ENCODE measurements at regions of chr2 and their contacts with region 1.

Region 1: GRCh38 chr2:219294356-219295351 is 14.5 kb downstream of the PTPRN start:
- DNase-seq: peak; percentile 89 to 96
- H3K4me3 ChIP-seq: peak overlapping the region; percentile 60 to 79 (median 74)
- H3K27ac ChIP-seq: peak overlapping the region; percentile 41; the same call in 1 of the 2 replicates
- H3K4me1 ChIP-seq: peaks cover 0 to 8% (median 3%) of the 10 kb centered on the region in 4 experiments; a peak in 4 of 7 replicates
- H3K27me3 ChIP-seq: peaks cover 0 to 32% (median 19%) of the 10 kb centered on the region in 4 experiments; a peak in 6 of 7 replicates
- CTCF ChIP-seq: peak in 2 of 3 experiments; percentile 98 to 99; a peak in 3 of 4 replicates
- EP300 ChIP-seq: no peak
- POLR2A ChIP-seq: peak in 1 of 2 experiments; percentile 62; a peak in 2 of 3 replicates
- RAD21 ChIP-seq: peak; percentile 64 to 78

Region 2: DNA sequence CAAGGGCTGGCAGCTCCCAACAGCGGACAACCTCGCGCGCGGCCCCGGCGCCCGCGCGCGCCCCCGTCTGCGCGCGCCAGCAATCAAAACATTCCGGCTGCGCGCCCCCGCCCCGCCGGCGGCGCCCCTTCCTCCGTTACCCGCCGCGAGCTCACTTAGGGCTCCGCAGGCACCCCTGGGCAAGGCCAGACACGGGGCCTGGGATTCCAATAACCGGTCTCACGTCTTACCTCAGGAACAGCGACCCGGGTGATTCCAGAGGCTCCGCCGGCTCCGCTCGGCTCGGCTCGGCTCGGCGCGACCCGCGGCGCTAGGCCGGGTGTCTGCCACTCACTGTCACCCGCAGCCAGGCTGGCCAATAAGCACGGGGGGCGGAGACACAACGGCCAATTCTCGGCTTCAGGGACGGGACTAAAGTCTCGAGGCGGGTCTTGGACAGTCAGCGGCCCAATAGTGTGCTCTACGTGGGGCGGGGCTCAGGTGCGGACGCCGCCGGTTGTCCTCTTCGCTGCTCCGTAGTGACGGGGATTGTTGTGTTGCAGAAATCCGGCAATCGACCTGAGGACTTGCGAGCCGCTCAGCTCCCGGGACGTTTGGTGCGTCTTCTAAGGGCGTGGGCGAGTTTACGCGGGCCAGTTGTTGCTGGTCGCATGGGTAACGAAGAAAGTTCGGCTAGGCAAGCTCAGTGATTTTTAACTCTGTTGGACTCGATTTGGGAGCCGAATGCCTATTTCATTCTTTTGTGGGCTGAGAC is 65.2 kb before region 1 on chr2 and contains the starts of genes ANKZF1 and ATG9A:
- CTCF ChIA-PET with region 1: interaction called, 23 read pairs
- POLR2A ChIA-PET with region 1: no interaction called
- DNase-seq: peak; percentile 93 to 95
- H3K4me3 ChIP-seq: peak within 1 kb of the TSS; percentile 82 to 97 (median 92)
- H3K27ac ChIP-seq: peak within 1 kb of the TSS; percentile 71
- H3K4me1 ChIP-seq: peaks cover 0 to 6% (median 3%) of the 10 kb centered on the region in 4 experiments; a peak in 5 of 7 replicates
- H3K27me3 ChIP-seq: no peaks in the 10 kb centered on the region; a peak in 1 of 7 replicates
- CTCF ChIP-seq: no peak
- EP300 ChIP-seq: 0 out of 3 replicates have a peak, but pooled peaks of 1 of the 2 experiments have one; percentile 13
- POLR2A ChIP-seq: peak; percentile 79 to 90
- RAD21 ChIP-seq: peak in 1 of 2 experiments; percentile 6; a peak in 1 of 4 replicates
- total RNA-seq, gene ANKZF1: 44.4 and 50.1 TPM in 2 replicates
- total RNA-seq, gene ATG9A: 43.6 and 43.8 TPM in 2 replicates

Region 3: DNA sequence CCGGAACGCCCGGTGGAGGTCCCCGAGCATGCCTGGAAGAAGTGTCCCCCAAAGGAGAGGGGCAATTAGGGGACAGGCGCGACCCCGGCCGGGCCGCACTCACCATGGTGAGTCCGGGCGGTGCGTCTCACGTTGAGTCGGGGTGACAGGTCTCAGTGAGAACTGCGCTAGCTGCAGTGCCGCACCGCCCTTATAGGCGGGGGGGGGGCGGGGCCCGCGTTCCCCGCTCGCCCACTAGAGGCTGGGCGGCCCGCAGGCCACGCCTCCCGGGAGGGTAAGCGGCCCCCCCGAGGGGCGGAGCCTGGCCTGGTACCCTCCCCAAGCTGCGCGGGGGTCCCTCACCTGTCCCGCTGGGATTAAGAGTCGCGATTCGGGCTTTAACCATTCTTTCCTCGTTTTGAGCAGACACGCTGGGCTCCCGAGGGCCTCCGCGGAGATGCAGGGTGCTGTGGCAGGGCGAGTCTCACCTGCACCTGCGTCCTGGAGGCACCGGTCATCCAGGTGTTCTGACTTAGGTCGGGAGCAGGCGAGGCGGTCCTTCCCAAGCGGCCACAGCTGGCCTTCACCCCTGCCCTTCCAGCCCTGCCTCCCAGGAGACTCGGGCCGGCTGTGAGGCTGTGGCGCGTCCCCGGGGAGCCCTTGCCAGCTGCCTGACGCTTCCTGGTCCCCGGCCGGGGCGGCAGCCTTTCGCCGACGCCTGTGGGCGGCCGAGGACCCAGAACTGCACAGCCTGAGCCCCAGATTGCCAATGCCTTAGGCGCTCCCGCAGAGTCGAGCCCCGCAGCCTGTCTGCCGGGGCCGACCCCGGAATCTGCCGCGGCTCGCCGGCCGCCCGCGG is 40.7 kb before region 1 on chr2 and contains the start of gene TUBA4A:
- CTCF ChIA-PET with region 1: interaction called, 118 read pairs
- POLR2A ChIA-PET with region 1: interaction called, 13 read pairs
- DNase-seq: peak in 1 of 2 experiments; percentile 89
- H3K4me3 ChIP-seq: peak within 1 kb of the TSS; percentile 46 to 64 (median 57)
- H3K27ac ChIP-seq: no peak within 1 kb of the TSS
- H3K4me1 ChIP-seq: peaks cover 5 to 12% (median 9%) of the 10 kb centered on the region in 4 experiments
- H3K27me3 ChIP-seq: peaks cover 16 to 43% (median 36%) of the 10 kb centered on the region in 4 experiments
- CTCF ChIP-seq: no peak
- EP300 ChIP-seq: no peak
- POLR2A ChIP-seq: peak in 1 of 2 experiments; percentile 66; a peak in 2 of 3 replicates
- RAD21 ChIP-seq: no peak
- total RNA-seq, gene TUBA4A: 59.5 and 67.3 TPM in 2 replicates

Region 4: DNA sequence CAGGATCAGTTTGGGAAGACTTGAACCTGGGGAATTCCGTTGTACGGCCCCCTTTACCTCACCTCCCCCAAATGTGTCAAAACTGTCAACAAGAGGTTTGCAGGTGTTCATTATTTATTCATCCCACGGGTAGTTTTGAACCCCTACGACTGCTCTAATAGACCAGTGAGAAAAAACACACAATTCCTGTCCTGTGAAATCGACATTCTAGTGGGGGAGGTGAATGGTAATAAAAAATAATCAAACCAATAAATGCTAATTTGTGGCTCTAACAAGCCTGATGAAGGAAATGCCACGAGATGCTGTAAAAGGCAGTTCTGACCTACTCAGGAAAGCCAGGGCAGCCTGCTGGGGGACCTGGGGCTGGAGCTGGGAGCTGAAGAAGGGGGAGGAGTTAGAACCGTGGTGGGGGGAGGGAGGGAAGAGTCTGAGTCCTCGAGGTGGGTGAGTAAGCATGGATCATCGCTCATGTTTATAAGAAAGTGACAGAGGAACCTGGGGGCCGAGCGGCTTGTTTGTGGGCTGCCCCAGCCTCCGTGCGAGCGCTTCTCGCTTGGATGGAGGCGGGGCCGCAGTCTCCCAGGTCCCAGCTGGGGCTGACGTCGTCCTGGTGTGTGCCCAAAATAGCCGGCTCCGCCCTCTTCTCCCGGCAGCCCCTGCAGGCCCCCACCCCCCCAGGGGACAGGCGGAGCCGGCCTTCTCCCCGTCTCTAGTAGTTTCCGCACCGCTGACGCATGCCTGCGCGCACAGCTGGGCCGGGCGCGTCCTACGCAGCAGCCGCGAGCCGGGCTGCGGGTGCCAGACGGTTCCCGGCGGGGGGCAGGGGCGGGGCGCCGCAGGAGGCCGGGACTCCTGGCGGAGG is 15.8 kb before region 1 on chr2 and contains the start of gene DNAJB2:
- CTCF ChIA-PET with region 1: interaction called, 220 read pairs
- POLR2A ChIA-PET with region 1: interaction called, 33 read pairs
- DNase-seq: peak; percentile 89 to 94
- H3K4me3 ChIP-seq: peak within 1 kb of the TSS; percentile 45 to 75 (median 52)
- H3K27ac ChIP-seq: peak within 1 kb of the TSS; percentile 66; the same call in 1 of the 2 replicates
- H3K4me1 ChIP-seq: peaks cover 9 to 23% (median 14%) of the 10 kb centered on the region in 4 experiments
- H3K27me3 ChIP-seq: no peaks in the 10 kb centered on the region; a peak in 1 of 7 replicates
- CTCF ChIP-seq: no peak
- EP300 ChIP-seq: peak in 1 of 2 experiments; percentile 61; a peak in 1 of 3 replicates
- POLR2A ChIP-seq: 0 out of 3 replicates have a peak, but pooled peaks of 1 of the 2 experiments have one; percentile 31
- RAD21 ChIP-seq: no peak
- total RNA-seq, gene DNAJB2: 26.3 and 33.5 TPM in 2 replicates

Region 5: GRCh38 chr2:219323434-219323833 is 28.8 kb after region 1 on chr2:
- CTCF ChIA-PET with region 1: interaction called, 12 read pairs
- POLR2A ChIA-PET with region 1: no interaction called
- DNase-seq: no peak
- H3K4me3 ChIP-seq: no peak overlapping the region
- H3K27ac ChIP-seq: no peak overlapping the region
- H3K4me1 ChIP-seq: no peaks in the 10 kb centered on the region
- H3K27me3 ChIP-seq: no peaks in the 10 kb centered on the region; a peak in 2 of 7 replicates
- CTCF ChIP-seq: no peak
- EP300 ChIP-seq: no peak
- POLR2A ChIP-seq: no peak
- RAD21 ChIP-seq: no peak

Region 6: DNA sequence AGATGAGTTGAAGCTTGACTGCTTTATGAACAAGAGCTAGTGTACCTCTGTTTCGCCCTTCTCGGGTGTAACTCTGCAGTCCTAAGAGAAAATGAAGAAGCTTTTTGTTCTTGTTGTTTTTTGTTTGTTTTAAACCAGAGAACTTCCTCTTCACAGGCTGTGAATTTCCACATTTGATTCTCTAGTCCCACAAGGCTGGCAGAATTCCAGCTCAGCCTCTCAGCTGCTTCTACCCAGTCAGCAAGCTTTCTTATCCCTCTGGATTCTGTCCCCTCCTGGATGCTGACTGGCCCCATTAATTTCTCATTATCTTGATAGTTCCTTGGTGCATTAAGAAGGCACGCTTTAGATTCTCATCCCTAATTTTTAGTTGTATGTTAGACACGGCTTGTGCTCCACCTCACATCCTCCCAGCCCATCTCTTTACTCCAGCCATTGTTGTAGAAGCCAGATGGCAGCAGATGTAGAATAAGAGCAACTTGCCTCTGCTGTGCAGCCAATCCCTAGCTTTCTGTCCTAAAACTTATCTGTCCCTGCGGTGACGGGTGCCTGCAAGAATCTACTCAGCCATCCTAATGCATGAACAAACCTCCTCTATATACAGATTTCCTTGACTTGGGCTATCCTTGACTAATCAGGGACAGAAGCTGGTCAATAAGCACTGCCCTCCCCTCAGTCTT is 50.2 kb after region 1 on chr2:
- CTCF ChIA-PET with region 1: interaction called, 50 read pairs
- POLR2A ChIA-PET with region 1: no interaction called
- DNase-seq: no peak
- H3K4me3 ChIP-seq: no peak overlapping the region
- H3K27ac ChIP-seq: no peak overlapping the region
- H3K4me1 ChIP-seq: no peaks in the 10 kb centered on the region
- H3K27me3 ChIP-seq: no peaks in the 10 kb centered on the region; a peak in 2 of 7 replicates
- CTCF ChIP-seq: no peak
- EP300 ChIP-seq: no peak
- POLR2A ChIP-seq: no peak
- RAD21 ChIP-seq: no peak

Region 7: DNA sequence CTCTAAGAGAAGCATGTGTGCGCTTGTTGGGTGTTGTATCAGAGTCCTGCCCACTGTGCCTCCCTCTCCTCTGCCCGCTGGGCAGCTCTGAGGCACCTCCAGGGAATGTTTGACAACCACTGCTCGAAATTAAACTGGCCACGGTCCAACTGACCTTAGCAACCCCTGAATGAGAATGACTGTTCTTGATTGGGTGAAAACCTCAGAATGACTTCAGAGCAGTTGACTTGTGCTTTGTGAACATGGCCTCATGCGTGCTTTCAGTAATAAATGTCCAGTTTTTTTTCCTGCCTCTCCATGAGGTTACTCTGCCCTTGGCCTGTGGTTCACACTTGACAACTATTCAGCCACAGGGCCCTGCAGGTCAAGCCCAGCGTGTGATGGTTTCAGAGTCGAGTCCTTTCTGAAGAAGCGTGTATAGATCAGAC is 427.7 kb after region 1 on chr2:
- CTCF ChIA-PET with region 1: no interaction called
- POLR2A ChIA-PET with region 1: no interaction called
- DNase-seq: no peak
- H3K4me3 ChIP-seq: no peak overlapping the region
- H3K27ac ChIP-seq: no peak overlapping the region
- H3K4me1 ChIP-seq: no peaks in the 10 kb centered on the region
- H3K27me3 ChIP-seq: no peaks in the 10 kb centered on the region
- CTCF ChIP-seq: no peak
- EP300 ChIP-seq: no peak
- POLR2A ChIP-seq: no peak
- RAD21 ChIP-seq: no peak

Measured in H1 (cell line).